ENCODE measurements at regions of chr4 and their contacts with region 1.

Region 1: GRCh38 chr4:99462875-99463464 is 27.8 kb upstream of the ADH7 start:
- DNase-seq: peak; percentile 66 to 72 (median 68)
- ATAC-seq: peak; percentile 97
- H3K4me3 ChIP-seq: no peak overlapping the region
- H3K27ac ChIP-seq: no peak overlapping the region
- H3K4me1 ChIP-seq: no peaks in the 10 kb centered on the region
- H3K27me3 ChIP-seq: no peaks in the 10 kb centered on the region
- CTCF ChIP-seq: peak; percentile 74 to 84 (median 79)
- EP300 ChIP-seq: no peak
- POLR2A ChIP-seq: no peak
- RAD21 ChIP-seq: peak; percentile 83 to 84

Region 2: DNA sequence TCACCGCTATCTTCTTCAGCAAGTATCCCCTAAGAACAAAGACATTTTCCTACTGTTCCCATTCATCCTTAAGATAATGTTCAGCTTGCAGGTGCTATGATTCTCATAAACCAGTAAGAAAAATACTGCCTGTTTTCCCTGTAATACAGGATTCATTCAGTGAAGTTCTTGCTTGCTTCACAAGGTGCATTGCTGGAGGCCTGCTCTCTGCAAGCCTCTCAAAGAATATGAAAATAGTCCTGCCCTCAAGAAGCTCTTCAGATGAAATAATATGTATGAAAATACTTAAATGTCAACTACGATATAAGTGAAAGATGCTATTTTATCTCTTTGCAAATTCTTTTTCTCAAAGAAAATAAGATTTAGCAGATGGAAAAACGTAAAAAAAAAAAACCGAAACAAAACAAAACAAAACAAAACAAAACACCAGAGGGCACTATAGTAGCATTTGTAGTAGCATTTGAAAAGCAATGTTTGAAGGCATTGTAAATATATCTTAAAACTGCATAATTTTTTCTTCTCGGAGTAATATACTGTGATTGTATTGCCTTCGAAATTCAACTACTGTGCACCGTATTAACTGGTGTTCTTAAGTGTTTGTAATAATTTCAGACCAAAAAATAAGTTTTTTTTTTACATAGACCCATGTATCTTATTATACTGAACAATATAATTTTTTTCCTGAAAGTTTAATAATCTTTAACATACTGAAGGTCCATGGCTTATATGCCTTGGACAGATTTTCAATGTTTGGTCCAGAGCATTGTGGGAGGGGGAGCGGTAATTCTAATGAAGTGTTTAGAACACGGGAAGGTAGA is 344.9 kb before region 1 on chr4:
- CTCF ChIA-PET with region 1: no interaction called
- POLR2A ChIA-PET with region 1: no interaction called
- in situ Hi-C with region 1: no loop called
- intact Hi-C with region 1: loop called (anchors 2 kb)
- DNase-seq: peak in 1 of 4 experiments; percentile 15
- ATAC-seq: peak; percentile 59; the same call in 1 of the 3 replicates
- H3K4me3 ChIP-seq: no peak overlapping the region
- H3K27ac ChIP-seq: no peak overlapping the region
- H3K4me1 ChIP-seq: no peaks in the 10 kb centered on the region
- H3K27me3 ChIP-seq: no peaks in the 10 kb centered on the region
- CTCF ChIP-seq: peak in 1 of 3 experiments; percentile 47; a peak in 2 of 6 replicates
- EP300 ChIP-seq: no peak
- POLR2A ChIP-seq: no peak
- RAD21 ChIP-seq: no peak

Region 3: GRCh38 chr4:99414389-99414788 is 48.6 kb before region 1 on chr4:
- CTCF ChIA-PET with region 1: no interaction called
- POLR2A ChIA-PET with region 1: no interaction called
- in situ Hi-C with region 1: no loop called
- intact Hi-C with region 1: loop called (anchors 2 kb)
- DNase-seq: no peak
- ATAC-seq: no peak
- H3K4me3 ChIP-seq: no peak overlapping the region
- H3K27ac ChIP-seq: no peak overlapping the region
- H3K4me1 ChIP-seq: no peaks in the 10 kb centered on the region
- H3K27me3 ChIP-seq: no peaks in the 10 kb centered on the region
- CTCF ChIP-seq: no peak
- EP300 ChIP-seq: no peak
- POLR2A ChIP-seq: no peak
- RAD21 ChIP-seq: no peak